Activated T-helper 1 cell treated with anti-CD3 and anti-CD28 coated beads, Interleukin-12 subunit alpha, Interleukin-12 subunit beta, Interleukin-2, Interleukin-4 antibody, amounts not matched to agents 30 ng/mL and 10 ng/mL and 1 ng/mL, durations not matched to agents 14 hours and 24 hours and 36 hours (primary cell): ENCODE measurements at regions of chr1 and their contacts with region 1.

Region 1: DNA sequence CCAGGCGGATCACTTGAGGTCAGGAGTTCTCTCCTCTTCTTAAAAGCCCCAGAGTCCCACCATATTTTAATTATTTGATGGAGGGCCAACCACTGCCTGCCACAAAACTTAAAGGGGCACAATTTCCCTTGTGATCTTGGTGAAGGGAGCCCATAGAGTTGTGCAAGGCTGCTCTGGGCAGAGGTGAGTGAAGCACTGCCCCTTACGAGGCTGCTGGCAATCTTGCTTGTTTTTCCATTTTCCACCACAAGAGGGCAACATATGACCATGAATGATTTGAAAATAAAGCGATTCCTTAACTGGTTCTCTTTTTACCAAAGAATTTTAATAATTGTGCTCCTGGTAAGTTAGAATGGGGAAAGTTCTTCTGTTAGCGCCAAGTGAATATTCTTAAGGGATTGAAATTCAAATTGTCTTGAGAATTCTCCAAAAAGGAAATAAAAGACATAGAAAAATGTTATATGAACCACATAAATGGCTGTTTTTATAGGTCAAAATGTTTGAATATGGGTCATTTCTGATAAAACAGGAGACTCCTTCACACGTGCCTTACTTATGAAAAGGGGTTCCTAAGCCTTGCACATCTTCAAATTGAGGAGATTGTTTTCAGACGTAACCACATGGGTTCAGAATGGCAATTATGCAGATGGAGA is 22.7 kb downstream of the PGM1 start:
- DNase-seq: peak; percentile 53
- H3K4me3 Mint-ChIP-seq: no peak overlapping the region
- H3K27ac Mint-ChIP-seq: no peak overlapping the region
- H3K4me1 Mint-ChIP-seq: peaks cover 3% of the 10 kb centered on the region
- H3K27me3 Mint-ChIP-seq: no peaks in the 10 kb centered on the region

Region 2: GRCh38 chr1:62891956-62892561 is 723.8 kb before region 1 on chr1:
- intact Hi-C with region 1: no loop called
- DNase-seq: no peak
- H3K4me3 Mint-ChIP-seq: no peak overlapping the region
- H3K27ac Mint-ChIP-seq: no peak overlapping the region
- H3K4me1 Mint-ChIP-seq: no peaks in the 10 kb centered on the region
- H3K27me3 Mint-ChIP-seq: peaks cover 15% of the 10 kb centered on the region

Region 3: GRCh38 chr1:63691701-63692425 is 76.0 kb after region 1 on chr1:
- intact Hi-C with region 1: loop called (anchors 1 kb)
- DNase-seq: peak; percentile 4
- H3K4me3 Mint-ChIP-seq: no peak overlapping the region
- H3K27ac Mint-ChIP-seq: no peak overlapping the region
- H3K4me1 Mint-ChIP-seq: peaks cover 6% of the 10 kb centered on the region
- H3K27me3 Mint-ChIP-seq: no peaks in the 10 kb centered on the region

Region 4: GRCh38 chr1:63731117-63732043 is 115.5 kb after region 1 on chr1:
- intact Hi-C with region 1: no loop called
- DNase-seq: no peak
- H3K4me3 Mint-ChIP-seq: no peak overlapping the region
- H3K27ac Mint-ChIP-seq: no peak overlapping the region
- H3K4me1 Mint-ChIP-seq: no peaks in the 10 kb centered on the region
- H3K27me3 Mint-ChIP-seq: peaks cover 15% of the 10 kb centered on the region

Region 5: GRCh38 chr1:63746129-63746864 is 130.4 kb after region 1 on chr1:
- intact Hi-C with region 1: no loop called
- DNase-seq: peak; percentile 2
- H3K4me3 Mint-ChIP-seq: peak overlapping the region; percentile 21
- H3K27ac Mint-ChIP-seq: peak overlapping the region; percentile 46
- H3K4me1 Mint-ChIP-seq: peaks cover 35% of the 10 kb centered on the region
- H3K27me3 Mint-ChIP-seq: no peaks in the 10 kb centered on the region

Region 6: GRCh38 chr1:63773815-63774616 is 158.1 kb after region 1 on chr1 and contains the start of gene ROR1:
- intact Hi-C with region 1: loop called (anchors 5 kb)
- DNase-seq: peak; percentile 43
- H3K4me3 Mint-ChIP-seq: peak within 1 kb of the TSS; percentile 85
- H3K27ac Mint-ChIP-seq: peak within 1 kb of the TSS; percentile 53
- H3K4me1 Mint-ChIP-seq: peaks cover 22% of the 10 kb centered on the region
- H3K27me3 Mint-ChIP-seq: peaks cover 62% of the 10 kb centered on the region
- total RNA-seq, gene ROR1: 0.05 TPM in 1 of 2 replicates, not detected in the other

Region 7: GRCh38 chr1:63843884-63844283 is 228.0 kb after region 1 on chr1:
- intact Hi-C with region 1: no loop called
- DNase-seq: no peak
- H3K4me3 Mint-ChIP-seq: no peak overlapping the region
- H3K27ac Mint-ChIP-seq: no peak overlapping the region
- H3K4me1 Mint-ChIP-seq: no peaks in the 10 kb centered on the region
- H3K27me3 Mint-ChIP-seq: peaks cover 2% of the 10 kb centered on the region

Region 8: DNA sequence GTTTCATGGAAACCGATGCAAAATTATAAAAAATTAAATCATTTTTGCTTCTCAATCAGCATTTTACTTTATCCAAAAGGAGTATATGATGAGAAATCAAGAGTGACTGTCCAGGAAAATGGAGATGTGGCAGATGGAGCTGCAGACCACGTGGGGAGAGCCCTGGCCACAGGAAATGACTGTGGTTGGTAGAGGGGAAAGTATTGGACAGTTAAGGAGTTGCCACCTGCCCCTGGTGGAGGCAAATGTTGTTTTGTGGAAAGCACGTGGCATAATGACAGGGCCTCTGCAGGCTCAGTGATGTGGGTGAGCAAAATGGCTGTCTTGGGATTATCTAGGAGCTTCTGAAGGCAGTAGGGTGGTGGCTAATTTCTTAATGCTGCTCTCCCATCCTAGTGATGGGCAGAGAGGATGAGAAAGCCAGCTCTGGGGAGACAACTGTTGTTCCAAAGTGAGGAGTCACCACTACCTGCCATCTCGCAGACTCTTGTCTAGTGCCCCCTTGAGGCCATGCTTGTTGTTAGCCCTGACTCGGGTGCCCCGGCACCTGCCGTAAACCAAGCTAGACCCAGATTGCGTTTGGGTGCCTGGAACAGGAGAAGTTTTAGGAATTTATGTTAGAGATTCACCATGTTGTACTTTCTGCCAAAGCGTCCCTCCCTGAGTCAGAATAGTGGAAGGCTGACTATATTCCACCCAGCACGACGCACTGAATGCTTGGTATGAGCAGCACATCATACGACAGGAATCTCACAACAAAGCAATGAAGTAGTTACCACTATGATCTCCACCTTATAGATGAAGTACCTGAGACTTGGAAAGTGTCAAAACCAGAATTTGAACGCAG is 301.9 kb after region 1 on chr1:
- intact Hi-C with region 1: loop called (anchors 1 kb)
- DNase-seq: no peak
- H3K4me3 Mint-ChIP-seq: no peak overlapping the region
- H3K27ac Mint-ChIP-seq: no peak overlapping the region
- H3K4me1 Mint-ChIP-seq: no peaks in the 10 kb centered on the region
- H3K27me3 Mint-ChIP-seq: peaks cover 3% of the 10 kb centered on the region

Region 9: GRCh38 chr1:64136752-64137411 is 521.0 kb after region 1 on chr1:
- intact Hi-C with region 1: loop called (anchors 1 kb)
- DNase-seq: peak; percentile 40
- H3K4me3 Mint-ChIP-seq: no peak overlapping the region
- H3K27ac Mint-ChIP-seq: no peak overlapping the region
- H3K4me1 Mint-ChIP-seq: no peaks in the 10 kb centered on the region
- H3K27me3 Mint-ChIP-seq: peaks cover 2% of the 10 kb centered on the region